Activated naive CD8-positive, alpha-beta T cell treated with anti-CD3 and anti-CD28 coated beads, Interleukin-2, amount 10 ng/mL, durations not matched to agents 7 days and 5 days (primary cell): ENCODE measurements at regions of chr5 and their contacts with region 1.

Region 1: GRCh38 chr5:135310328-135310989 is 88.6 kb downstream of the MACROH2A1 start:
- DNase-seq: no peak
- ATAC-seq: peak; percentile 58
- H3K4me3 Mint-ChIP-seq: peak overlapping the region; percentile 63
- H3K27ac Mint-ChIP-seq: peak overlapping the region; percentile 91
- H3K4me1 Mint-ChIP-seq: peaks cover 69% of the 10 kb centered on the region
- H3K27me3 Mint-ChIP-seq: peaks cover 1% of the 10 kb centered on the region

Region 2: DNA sequence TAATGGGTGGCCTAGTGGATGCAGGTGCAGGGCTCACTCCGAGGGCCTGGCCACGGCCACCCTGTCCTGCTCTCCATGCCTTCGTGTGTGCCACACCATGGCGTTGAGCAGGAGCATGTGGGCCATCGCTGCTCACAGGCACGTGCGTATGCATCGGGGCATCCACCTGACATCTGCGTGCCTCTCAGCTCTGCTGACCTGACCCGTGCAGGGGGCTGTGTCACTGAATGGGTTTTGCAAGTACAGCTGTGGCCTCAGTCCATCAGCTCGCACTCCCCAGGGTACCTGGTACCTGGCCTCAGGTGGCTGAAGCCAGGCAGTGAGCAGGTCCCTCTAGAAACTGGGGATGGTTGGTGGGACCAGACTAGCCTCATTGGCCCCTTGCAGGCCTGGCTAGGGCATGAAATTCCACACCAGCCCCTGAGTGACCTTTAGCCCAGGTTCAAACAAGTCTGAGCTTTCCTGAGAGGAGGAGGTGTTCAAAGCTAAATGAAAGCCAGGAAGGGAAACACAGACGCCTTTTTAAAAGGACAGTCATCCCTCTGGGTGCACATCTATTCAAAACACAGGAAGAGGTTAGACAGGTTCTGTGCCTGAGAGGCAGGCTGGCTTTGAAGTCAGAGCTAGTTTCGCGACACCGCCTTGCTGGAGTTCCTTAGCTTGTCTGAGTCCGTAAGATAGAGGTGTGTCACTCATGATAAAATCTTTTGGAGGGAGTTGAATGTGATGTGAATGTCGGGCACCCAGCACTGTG is 14.6 kb after region 1 on chr5:
- POLR2A ChIA-PET with region 1: interaction called, 14 read pairs
- DNase-seq: no peak
- ATAC-seq: peak; percentile 96
- H3K4me3 Mint-ChIP-seq: peak overlapping the region; percentile 44
- H3K27ac Mint-ChIP-seq: peak overlapping the region; percentile 86
- H3K4me1 Mint-ChIP-seq: peaks cover 38% of the 10 kb centered on the region
- H3K27me3 Mint-ChIP-seq: no peaks in the 10 kb centered on the region